Common myeloid progenitor, CD34-positive (primary cell): ENCODE measurements at regions of chr1 and their contacts with region 1.

Region 1: GRCh38 chr1:9292361-9293240 is at the start of gene SPSB1:
- DNase-seq: peak; percentile 74 to 83 (median 81)
- H3K4me3 ChIP-seq: peak within 1 kb of the TSS; percentile 32 to 73 (median 67)
- H3K27ac ChIP-seq: no peak within 1 kb of the TSS
- H3K4me1 ChIP-seq: peaks cover 0 to 27% (median 21%) of the 10 kb centered on the region in 4 experiments
- H3K27me3 ChIP-seq: peaks cover 0 to 32% (median 13%) of the 10 kb centered on the region in 5 experiments

Region 2: DNA sequence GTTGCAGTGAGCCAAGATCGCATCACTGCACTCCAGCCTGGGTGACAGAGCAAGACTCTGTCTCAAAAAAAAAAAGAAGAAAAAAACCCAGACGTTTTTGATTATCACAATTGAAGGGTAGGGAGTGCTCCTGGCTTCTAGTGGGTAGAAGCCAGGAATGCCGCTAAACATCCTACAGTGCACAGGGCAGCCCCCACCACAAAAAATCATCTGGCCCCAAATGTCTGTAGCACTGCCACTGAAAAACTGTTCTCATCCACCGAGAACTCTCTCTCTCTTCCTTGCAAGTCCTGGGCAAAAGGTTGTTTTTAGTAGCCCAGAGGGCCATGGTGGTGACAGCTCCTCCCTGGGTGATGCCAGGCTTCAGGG is 128.1 kb before region 1 on chr1:
- CTCF ChIA-PET with region 1: no interaction called
- POLR2A ChIA-PET with region 1: no interaction called
- DNase-seq: no peak
- H3K4me3 ChIP-seq: no peak overlapping the region
- H3K27ac ChIP-seq: no peak overlapping the region
- H3K4me1 ChIP-seq: peaks cover 0 to 10% (median 2%) of the 10 kb centered on the region in 4 experiments
- H3K27me3 ChIP-seq: no peaks in the 10 kb centered on the region

Region 3: DNA sequence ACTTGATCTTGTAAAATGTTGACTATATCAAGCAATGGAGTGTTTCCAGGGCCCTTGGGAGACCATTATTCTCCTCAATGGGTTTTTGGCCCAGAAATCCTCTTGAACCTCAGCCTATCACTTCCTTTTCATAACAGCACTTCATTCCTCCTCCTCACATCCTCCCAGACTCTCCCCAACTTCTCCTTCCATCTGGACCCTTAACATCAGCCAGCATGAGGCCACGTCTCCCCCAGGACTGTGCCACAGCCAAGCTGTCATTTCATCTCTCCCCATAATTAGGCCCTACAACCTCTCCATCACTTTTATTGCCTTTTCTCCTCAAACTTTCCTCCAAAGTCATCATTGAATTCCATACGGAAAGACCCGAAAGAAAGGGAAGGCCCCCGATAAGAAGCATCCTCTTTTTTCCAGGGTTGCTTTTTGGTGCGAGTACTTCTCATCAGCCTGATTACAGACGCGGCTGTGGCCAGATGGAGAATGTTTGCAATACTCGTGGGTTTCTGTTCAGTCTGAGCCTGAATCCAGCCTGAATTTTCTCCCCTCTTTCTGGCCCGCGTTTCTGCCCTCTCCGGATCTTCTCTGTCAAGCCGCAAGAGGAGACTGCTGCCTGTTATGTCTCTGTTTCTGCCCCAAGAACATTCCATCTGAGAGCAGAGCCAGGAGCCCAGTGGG is 194.0 kb after region 1 on chr1:
- CTCF ChIA-PET with region 1: interaction called, 40 read pairs
- POLR2A ChIA-PET with region 1: no interaction called
- DNase-seq: no peak
- H3K4me3 ChIP-seq: no peak overlapping the region
- H3K27ac ChIP-seq: no peak overlapping the region
- H3K4me1 ChIP-seq: peaks cover 0 to 4% (median 0%) of the 10 kb centered on the region in 4 experiments
- H3K27me3 ChIP-seq: peaks cover 0 to 3% (median 0%) of the 10 kb centered on the region in 5 experiments